ENCODE measurements at regions of chr3 and their contacts with region 1.

Region 1: DNA sequence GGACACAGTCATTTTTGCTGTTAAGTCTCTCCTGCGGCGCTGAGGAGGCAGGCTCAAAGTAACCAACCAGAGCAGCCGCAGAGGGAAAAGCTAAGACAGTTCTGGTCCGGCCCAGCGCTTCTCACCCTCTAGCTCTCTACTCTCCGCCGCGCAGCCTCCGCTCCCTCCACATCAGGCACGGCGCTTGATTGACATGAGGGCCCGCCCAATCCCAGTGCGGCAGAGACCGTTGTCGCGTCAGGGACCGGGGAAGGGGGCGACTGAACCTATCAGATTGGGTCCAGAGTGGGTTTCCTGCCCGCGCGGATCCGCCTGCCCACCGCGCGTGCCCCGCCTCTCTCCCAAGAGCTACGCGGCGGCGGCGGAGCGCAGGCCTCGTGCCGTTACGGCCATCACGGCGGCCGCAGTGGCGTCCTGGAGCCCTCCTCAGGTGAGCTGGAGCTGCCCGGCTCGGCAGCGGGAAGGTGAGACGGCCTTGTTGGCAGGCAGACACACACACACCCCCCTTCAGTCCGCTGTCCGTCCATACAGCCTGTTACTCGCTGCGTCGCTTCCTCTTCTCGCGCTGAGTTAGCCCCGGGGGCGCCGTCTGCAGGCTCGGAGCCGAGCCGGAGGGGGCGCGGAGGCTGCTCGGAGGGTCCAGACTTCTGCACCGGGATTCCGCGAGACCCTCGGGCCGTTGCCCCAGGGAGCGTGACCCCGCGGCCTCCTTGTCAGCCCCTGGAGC is at the start of gene NCK1:
- DNase-seq: peak; percentile 99
- H3K4me3 ChIP-seq: peak within 1 kb of the TSS; percentile 59 to 92 (median 74)
- H3K27ac ChIP-seq: peak within 1 kb of the TSS; percentile 88 to 96 (median 93)
- H3K4me1 ChIP-seq: peaks cover 0 to 24% (median 18%) of the 10 kb centered on the region in 4 donors
- H3K27me3 ChIP-seq: no peaks in the 10 kb centered on the region
- CTCF ChIP-seq: no peak
- EP300 ChIP-seq: no peak
- POLR2A ChIP-seq: peak; percentile 67 to 83
- total RNA-seq, gene NCK1: 37.2 to 55.1 (median 47.0) TPM

Region 2: DNA sequence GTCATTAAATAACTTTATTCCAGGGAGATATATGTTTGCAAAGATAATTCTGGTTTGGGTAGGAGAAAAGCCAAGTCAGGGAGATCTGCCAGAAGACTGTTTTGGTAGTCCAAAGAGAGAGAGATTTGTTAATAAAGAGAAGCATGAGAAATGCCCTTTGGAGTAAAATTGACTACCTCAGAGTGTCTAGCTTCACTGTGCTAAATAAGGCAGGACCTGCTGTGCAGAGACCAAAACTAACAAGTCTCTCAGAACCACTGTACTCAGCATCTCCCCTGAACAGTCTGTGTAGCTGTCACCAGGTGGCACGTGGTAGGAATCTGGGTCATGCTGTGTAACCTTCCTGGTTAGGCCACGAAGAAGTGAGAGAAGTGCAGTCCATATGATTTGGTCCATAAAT is 74.7 kb before region 1 on chr3:
- intact Hi-C with region 1: loop called (anchors 5 kb)
- DNase-seq: no peak
- H3K4me3 ChIP-seq: no peak overlapping the region
- H3K27ac ChIP-seq: peak overlapping the region; percentile 64 to 76 (median 66)
- H3K4me1 ChIP-seq: peaks cover 0 to 31% (median 27%) of the 10 kb centered on the region in 4 donors
- H3K27me3 ChIP-seq: no peaks in the 10 kb centered on the region
- CTCF ChIP-seq: no peak
- EP300 ChIP-seq: no peak
- POLR2A ChIP-seq: no peak

Region 3: GRCh38 chr3:136818769-136819391 is 43.2 kb before region 1 on chr3 and contains the start of gene SLC35G2:
- intact Hi-C with region 1: loop called (anchors 5 kb)
- DNase-seq: peak; percentile 69
- H3K4me3 ChIP-seq: peak within 1 kb of the TSS; percentile 57 to 68 (median 62)
- H3K27ac ChIP-seq: peak within 1 kb of the TSS; percentile 59 to 84 (median 68)
- H3K4me1 ChIP-seq: peaks cover 0 to 16% (median 14%) of the 10 kb centered on the region in 4 donors
- H3K27me3 ChIP-seq: no peaks in the 10 kb centered on the region
- CTCF ChIP-seq: no peak
- EP300 ChIP-seq: no peak
- POLR2A ChIP-seq: no peak
- total RNA-seq, gene SLC35G2: 3.4 to 8.0 (median 5.3) TPM

Region 4: DNA sequence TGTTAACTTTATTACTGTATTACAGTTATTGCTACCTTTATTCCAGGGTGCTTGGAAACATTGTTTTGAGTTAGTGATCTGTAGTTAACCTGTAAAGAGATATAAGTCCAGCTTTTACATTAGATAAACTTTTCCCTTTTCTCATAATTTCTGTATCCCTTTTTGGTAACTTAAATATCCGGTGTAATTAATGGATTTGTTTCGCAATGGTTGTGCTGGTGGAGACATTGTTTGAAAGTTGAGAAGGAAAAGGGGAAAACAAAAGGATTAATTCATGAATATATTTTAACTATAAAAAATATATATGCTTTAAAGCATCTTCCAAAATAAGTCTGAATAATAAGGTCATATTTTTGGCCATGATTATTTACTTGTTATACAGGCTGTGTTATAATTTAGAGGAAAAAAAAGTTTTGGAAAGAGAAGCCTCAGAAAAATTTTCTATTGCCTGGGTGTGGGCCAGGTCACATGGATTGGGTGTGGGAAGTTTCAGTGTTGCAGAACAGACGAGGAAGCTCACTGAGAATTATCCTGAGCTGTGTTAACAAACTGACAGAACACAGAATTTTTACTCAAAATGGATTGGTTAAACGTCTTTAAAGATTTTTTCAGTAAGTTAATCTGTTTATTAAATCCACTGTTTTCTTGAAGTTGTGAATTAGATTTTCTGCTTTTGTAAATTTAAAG is 68.1 kb after region 1 on chr3:
- intact Hi-C with region 1: loop called (anchors 5 kb)
- DNase-seq: peak; percentile 77
- H3K4me3 ChIP-seq: peak overlapping the region in 2 of 4 donors; percentile 11 to 18
- H3K27ac ChIP-seq: peak overlapping the region; percentile 34 to 58 (median 49)
- H3K4me1 ChIP-seq: peaks cover 0 to 44% (median 25%) of the 10 kb centered on the region in 4 donors
- H3K27me3 ChIP-seq: no peaks in the 10 kb centered on the region
- CTCF ChIP-seq: no peak
- EP300 ChIP-seq: no peak
- POLR2A ChIP-seq: no peak

Region 5: DNA sequence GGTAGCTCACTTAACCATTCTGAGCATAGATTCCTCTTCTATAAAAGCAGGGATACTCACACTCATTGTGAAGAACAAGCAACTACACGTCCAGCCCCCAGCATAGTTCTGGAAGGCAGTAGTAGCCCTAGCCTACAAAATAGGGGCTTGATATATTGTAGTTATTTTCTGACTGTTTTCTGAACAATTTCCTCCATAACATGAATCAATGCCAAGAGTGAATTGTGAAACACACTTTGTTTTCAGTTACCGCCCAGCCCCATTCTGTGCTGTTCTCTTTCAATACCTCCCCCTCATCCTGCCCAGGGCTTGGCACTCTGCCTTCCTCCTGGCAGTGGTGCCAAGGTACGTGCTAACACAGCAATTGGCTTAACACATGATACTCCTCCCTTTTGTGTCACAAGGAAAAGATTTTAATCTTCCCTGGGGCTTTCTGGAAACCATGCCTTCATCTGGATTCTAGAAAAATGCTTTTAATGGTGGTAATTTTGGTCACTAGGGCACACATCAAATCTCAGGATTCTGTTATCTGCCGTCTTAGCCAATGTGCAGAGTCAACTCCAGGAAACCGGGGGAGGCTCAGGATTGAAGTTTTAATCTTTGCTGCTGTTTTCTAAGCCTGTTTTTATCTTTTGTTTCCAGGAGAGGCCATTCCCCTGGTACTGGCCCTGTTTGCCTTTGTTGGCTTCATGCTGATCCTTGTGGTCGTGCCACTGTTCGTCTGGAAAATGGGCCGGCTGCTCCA is 132.9 kb after region 1 on chr3:
- intact Hi-C with region 1: loop called (anchors 5 kb)
- DNase-seq: peak; percentile 93
- H3K4me3 ChIP-seq: no peak overlapping the region
- H3K27ac ChIP-seq: peak overlapping the region; percentile 51 to 77 (median 68)
- H3K4me1 ChIP-seq: peaks cover 0 to 19% (median 16%) of the 10 kb centered on the region in 4 donors
- H3K27me3 ChIP-seq: no peaks in the 10 kb centered on the region
- CTCF ChIP-seq: no peak
- EP300 ChIP-seq: no peak
- POLR2A ChIP-seq: no peak

Region 6: DNA sequence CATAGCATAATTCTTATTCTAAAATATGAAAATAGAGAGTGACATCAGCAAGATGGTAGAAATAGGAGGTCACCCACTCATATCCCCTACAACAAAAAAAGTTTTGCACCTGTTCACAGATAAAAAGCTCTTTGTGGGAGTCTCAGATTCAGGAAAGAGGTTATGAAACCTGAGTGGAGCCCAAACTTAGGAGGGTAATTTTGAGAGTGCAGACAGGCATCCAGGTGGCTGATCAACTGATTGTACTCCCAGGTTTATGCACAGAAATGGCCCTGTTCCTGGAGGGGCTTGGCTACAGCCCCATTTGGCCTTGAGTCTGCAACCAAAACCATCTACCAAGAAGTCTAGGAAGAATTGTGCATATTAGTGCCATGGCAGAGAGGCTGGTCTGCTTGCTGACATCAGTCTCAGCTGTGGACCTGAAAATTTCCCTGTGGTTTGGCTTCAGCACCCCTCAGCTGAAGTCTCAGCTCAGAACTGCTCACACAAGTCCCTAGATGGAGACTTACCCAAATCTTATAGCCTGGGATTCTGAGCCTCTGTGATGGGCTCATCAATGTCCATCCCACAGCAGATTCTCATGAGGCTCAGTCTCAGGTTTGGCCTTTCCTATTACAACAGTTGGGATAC is 387.4 kb after region 1 on chr3:
- intact Hi-C with region 1: no loop called
- DNase-seq: no peak
- H3K4me3 ChIP-seq: no peak overlapping the region
- H3K27ac ChIP-seq: no peak overlapping the region
- H3K4me1 ChIP-seq: no peaks in the 10 kb centered on the region
- H3K27me3 ChIP-seq: no peaks in the 10 kb centered on the region
- CTCF ChIP-seq: no peak
- EP300 ChIP-seq: no peak
- POLR2A ChIP-seq: no peak

Measured in sigmoid colon (tissue), 7 donors.